Activated CD8-positive, alpha-beta T cell treated with anti-CD3 and anti-CD28 coated beads, Interleukin-2, amount 10 ng/mL, durations not matched to agents 7 days and 5 days (primary cell): ENCODE measurements at regions of chr7 and their contacts with region 1.

Region 1: GRCh38 chr7:149838224-149838947 is at the start of gene ZNF862:
- DNase-seq: peak; percentile 97
- ATAC-seq: peak; percentile 98
- H3K4me3 Mint-ChIP-seq: peak within 1 kb of the TSS; percentile 84
- H3K27ac Mint-ChIP-seq: peak within 1 kb of the TSS; percentile 83
- H3K4me1 Mint-ChIP-seq: peaks cover 29% of the 10 kb centered on the region
- H3K27me3 Mint-ChIP-seq: peaks cover 17% of the 10 kb centered on the region
- total RNA-seq, gene ZNF862: 21.5 to 24.9 TPM

Region 2: GRCh38 chr7:149790146-149790548 is 48.2 kb before region 1 on chr7:
- CTCF ChIA-PET with region 1: no interaction called
- POLR2A ChIA-PET with region 1: no interaction called
- DNase-seq: peak; percentile 62
- ATAC-seq: peak; percentile 77
- H3K4me3 Mint-ChIP-seq: no peak overlapping the region
- H3K27ac Mint-ChIP-seq: no peak overlapping the region
- H3K4me1 Mint-ChIP-seq: peaks cover 3% of the 10 kb centered on the region
- H3K27me3 Mint-ChIP-seq: peaks cover 12% of the 10 kb centered on the region

Region 3: DNA sequence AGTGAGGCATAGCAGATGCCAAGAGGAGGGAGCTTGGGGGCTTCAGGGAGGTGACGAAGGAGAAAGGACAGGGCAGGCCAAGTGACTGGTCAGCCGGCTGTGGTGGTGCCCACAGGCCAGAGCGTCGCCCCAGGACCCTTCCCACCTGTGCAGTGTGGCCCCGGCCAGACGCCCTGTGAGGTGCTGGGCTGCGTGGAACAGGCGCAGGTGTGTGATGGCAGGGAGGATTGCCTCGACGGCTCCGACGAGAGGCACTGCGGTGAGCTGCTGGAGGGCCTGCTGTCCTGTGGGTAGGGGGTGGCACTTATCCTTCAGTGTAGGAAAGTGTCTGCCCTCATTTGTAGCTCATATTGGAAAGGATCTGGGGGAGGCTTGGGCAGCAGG is 38.2 kb before region 1 on chr7:
- CTCF ChIA-PET with region 1: no interaction called
- POLR2A ChIA-PET with region 1: no interaction called
- DNase-seq: no peak
- ATAC-seq: no peak
- H3K4me3 Mint-ChIP-seq: no peak overlapping the region
- H3K27ac Mint-ChIP-seq: no peak overlapping the region
- H3K4me1 Mint-ChIP-seq: no peaks in the 10 kb centered on the region
- H3K27me3 Mint-ChIP-seq: no peaks in the 10 kb centered on the region

Region 4: DNA sequence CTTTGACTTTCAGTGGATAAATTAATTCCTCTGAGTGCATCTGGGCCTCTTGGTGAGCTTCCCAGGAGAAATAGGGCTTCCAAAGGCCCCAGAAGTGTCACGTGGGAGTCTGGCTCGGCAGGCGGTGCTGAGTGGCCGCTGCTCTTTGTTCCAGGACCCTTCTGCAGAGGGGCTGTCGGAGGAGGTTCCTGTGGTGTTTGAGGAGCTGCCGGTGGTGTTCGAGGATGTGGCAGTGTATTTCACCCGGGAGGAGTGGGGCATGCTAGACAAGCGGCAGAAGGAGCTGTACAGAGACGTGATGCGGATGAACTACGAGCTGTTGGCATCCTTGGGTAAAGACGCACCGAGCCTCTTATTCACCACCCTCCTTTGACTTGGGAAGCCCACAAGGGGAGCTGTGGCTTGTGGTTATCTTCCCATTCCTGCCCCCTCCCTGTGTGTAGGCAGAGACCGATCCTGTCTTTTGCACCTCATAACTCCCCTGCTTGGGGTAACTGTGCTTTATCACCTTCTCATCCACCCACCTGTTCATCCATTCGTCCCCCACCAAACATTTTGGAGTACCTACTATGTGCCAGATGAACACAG is 11.7 kb after region 1 on chr7:
- CTCF ChIA-PET with region 1: interaction called, 14 read pairs
- POLR2A ChIA-PET with region 1: interaction called, 6 read pairs
- DNase-seq: no peak
- ATAC-seq: no peak
- H3K4me3 Mint-ChIP-seq: no peak overlapping the region
- H3K27ac Mint-ChIP-seq: no peak overlapping the region
- H3K4me1 Mint-ChIP-seq: peaks cover 30% of the 10 kb centered on the region
- H3K27me3 Mint-ChIP-seq: no peaks in the 10 kb centered on the region

Region 5: DNA sequence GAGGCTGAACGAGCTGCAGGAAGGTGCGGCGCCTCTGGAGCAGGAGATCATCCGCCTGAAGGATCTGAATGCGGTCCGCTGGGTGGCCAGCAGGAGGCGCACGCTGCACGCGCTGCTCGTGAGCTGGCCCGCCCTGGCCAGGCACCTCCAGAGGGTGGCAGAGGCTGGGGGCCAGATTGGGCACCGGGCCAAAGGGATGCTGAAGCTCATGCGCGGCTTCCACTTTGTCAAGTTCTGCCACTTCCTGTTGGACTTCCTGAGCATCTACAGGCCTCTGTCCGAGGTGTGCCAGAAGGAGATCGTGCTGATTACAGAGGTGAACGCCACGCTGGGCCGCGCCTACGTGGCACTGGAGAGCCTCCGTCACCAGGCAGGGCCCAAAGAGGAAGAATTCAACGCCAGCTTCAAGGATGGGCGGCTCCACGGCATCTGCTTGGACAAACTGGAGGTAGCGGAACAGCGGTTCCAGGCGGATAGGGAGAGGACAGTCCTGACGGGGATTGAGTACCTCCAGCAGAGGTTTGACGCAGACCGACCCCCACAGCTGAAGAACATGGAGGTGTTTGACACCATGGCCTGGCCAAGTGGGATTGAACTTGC is 23.2 kb after region 1 on chr7:
- CTCF ChIA-PET with region 1: interaction called, 13 read pairs
- POLR2A ChIA-PET with region 1: interaction called, 11 read pairs
- DNase-seq: no peak
- ATAC-seq: no peak
- H3K4me3 Mint-ChIP-seq: no peak overlapping the region
- H3K27ac Mint-ChIP-seq: no peak overlapping the region
- H3K4me1 Mint-ChIP-seq: peaks cover 90% of the 10 kb centered on the region
- H3K27me3 Mint-ChIP-seq: no peaks in the 10 kb centered on the region

Region 6: GRCh38 chr7:149873074-149873969 is 34.9 kb after region 1 on chr7 and contains the start of gene ATP6V0E2:
- CTCF ChIA-PET with region 1: interaction called, 10 read pairs
- POLR2A ChIA-PET with region 1: interaction called, 35 read pairs
- DNase-seq: peak; percentile 96
- ATAC-seq: peak; percentile 89
- H3K4me3 Mint-ChIP-seq: peak within 1 kb of the TSS; percentile 84
- H3K27ac Mint-ChIP-seq: peak within 1 kb of the TSS; percentile 98
- H3K4me1 Mint-ChIP-seq: peaks cover 78% of the 10 kb centered on the region
- H3K27me3 Mint-ChIP-seq: no peaks in the 10 kb centered on the region
- total RNA-seq, gene ATP6V0E2: 92.9 to 99.6 TPM